Mammary epithelial cell (primary cell): ENCODE measurements at regions of chr2 and their contacts with region 1.

Region 1: GRCh38 chr2:85189606-85190270 is 56.5 kb downstream of the TCF7L1 start:
- DNase-seq: no peak
- H3K4me3 ChIP-seq: no peak overlapping the region
- H3K27ac ChIP-seq: no peak overlapping the region
- H3K4me1 ChIP-seq: peaks cover 8% of the 10 kb centered on the region
- H3K27me3 ChIP-seq: no peaks in the 10 kb centered on the region
- CTCF ChIP-seq: no peak

Region 2: DNA sequence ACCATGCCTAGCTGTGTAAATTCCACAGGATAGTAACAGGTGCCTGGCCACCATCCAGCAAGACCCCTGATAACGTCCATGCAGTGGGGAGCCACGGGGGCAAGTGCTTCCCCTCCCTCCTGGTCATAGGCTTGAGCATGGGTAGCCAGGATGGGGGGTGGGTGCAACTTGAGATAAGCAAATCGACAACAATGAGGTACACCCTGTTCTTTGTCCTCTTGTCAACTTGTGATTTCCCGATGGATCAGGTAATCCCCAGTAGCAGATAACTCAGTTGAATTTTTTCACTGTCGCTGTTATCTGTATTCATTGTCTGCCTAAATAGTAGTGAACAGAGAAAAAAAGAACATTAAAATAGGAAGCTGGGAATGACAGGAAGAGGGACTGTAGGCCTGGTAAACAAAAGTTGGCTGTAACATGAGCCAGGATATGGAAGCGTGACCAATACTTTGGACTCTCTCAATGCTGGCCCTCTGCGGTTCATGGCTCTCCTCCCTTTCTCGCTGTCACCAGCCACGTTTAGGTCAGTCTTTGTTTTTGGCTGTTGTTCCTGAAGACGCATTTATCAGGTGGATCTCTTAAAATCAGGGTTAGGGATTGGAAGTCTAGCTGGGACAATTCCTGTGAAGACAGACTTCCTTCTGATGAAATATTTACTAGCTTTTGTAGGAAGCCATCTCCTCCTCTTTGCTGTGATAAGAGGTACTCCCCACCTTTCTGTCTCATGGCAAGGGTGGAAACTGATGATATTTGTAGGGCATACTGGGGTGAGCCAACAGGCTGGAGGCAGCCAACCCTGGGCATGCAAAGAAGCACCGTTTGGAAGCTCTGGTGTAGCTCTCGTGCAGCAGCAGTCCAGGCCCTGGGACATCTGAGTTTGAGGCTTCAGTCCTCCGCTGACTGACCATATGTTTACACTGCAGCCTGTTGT is 14.1 kb before region 1 on chr2:
- CTCF ChIA-PET with region 1: interaction called, 33 read pairs
- dilution Hi-C with region 1: no loop called
- in situ Hi-C with region 1: no loop called
- intact Hi-C with region 1: no loop called
- DNase-seq: no peak
- H3K4me3 ChIP-seq: no peak overlapping the region
- H3K27ac ChIP-seq: no peak overlapping the region
- H3K4me1 ChIP-seq: peaks cover 12% of the 10 kb centered on the region
- H3K27me3 ChIP-seq: no peaks in the 10 kb centered on the region
- CTCF ChIP-seq: no peak

Region 3: GRCh38 chr2:85226783-85227182 is 37.0 kb after region 1 on chr2:
- CTCF ChIA-PET with region 1: no interaction called
- dilution Hi-C with region 1: loop called (anchors 5 kb)
- in situ Hi-C with region 1: no loop called
- intact Hi-C with region 1: no loop called
- DNase-seq: no peak
- H3K4me3 ChIP-seq: no peak overlapping the region
- H3K27ac ChIP-seq: no peak overlapping the region
- H3K4me1 ChIP-seq: no peaks in the 10 kb centered on the region
- H3K27me3 ChIP-seq: no peaks in the 10 kb centered on the region
- CTCF ChIP-seq: no peak